Body of pancreas (tissue), 4 donors: ENCODE measurements at regions of chr4 and their contacts with region 1.

Region 1: DNA sequence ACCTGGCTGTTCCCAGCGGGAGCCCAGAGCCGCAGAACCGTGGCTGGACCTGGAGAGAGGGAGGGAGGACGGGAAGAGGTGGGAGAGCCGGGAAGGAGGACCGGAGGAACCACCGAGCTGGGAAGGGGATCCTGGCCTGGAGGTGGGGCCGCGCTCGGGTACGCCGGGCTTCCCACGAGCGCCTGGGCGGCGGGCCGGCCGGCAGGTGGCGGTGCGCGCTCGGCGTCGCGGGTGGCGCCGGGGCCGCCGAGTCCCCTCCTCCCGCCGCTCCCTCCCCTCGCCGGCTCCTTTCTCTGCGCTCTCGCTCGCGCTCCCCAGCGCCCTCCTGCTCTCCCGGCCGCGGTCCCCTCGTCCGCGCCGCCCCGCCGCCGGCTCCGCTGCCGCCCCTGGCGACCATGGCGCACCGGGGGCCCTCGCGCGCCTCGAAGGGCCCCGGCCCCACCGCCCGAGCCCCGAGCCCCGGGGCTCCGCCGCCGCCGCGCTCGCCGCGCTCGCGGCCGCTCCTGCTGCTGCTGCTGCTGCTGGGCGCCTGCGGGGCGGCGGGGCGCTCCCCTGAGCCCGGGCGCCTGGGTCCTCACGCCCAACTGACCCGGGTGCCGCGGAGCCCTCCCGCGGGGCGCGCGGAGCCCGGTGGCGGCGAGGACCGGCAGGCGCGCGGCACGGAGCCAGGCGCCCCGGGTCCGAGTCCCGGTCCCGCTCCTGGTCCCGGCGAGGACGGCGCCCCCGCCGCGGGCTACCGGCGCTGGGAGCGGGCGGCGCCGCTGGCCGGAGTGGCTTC is at the start of gene SORCS2:
- DNase-seq: peak; percentile 59 to 77 (median 62)
- ATAC-seq: peak; percentile 84
- H3K4me3 ChIP-seq: no peak within 1 kb of the TSS
- H3K27ac ChIP-seq: no peak within 1 kb of the TSS
- H3K4me1 ChIP-seq: peaks cover 12% of the 10 kb centered on the region
- H3K27me3 ChIP-seq: peaks cover 0 to 14% of the 10 kb centered on the region in 2 donors
- CTCF ChIP-seq: peak; percentile 13 to 94 (median 76)
- POLR2A ChIP-seq: no peak
- total RNA-seq, gene SORCS2: 0.26 to 0.33 TPM

Region 2: GRCh38 chr4:7134737-7135388 is 57.6 kb before region 1 on chr4:
- intact Hi-C with region 1: no loop called
- DNase-seq: peak; percentile 26 to 49 (median 36)
- ATAC-seq: peak; percentile 34
- H3K4me3 ChIP-seq: no peak overlapping the region
- H3K27ac ChIP-seq: no peak overlapping the region
- H3K4me1 ChIP-seq: no peaks in the 10 kb centered on the region
- H3K27me3 ChIP-seq: no peaks in the 10 kb centered on the region
- CTCF ChIP-seq: no peak
- POLR2A ChIP-seq: no peak

Region 3: GRCh38 chr4:7276515-7276914 is 84.1 kb after region 1 on chr4:
- intact Hi-C with region 1: no loop called
- DNase-seq: no peak
- ATAC-seq: no peak
- H3K4me3 ChIP-seq: no peak overlapping the region
- H3K27ac ChIP-seq: no peak overlapping the region
- H3K4me1 ChIP-seq: no peaks in the 10 kb centered on the region
- H3K27me3 ChIP-seq: no peaks in the 10 kb centered on the region
- CTCF ChIP-seq: no peak
- POLR2A ChIP-seq: no peak

Region 4: DNA sequence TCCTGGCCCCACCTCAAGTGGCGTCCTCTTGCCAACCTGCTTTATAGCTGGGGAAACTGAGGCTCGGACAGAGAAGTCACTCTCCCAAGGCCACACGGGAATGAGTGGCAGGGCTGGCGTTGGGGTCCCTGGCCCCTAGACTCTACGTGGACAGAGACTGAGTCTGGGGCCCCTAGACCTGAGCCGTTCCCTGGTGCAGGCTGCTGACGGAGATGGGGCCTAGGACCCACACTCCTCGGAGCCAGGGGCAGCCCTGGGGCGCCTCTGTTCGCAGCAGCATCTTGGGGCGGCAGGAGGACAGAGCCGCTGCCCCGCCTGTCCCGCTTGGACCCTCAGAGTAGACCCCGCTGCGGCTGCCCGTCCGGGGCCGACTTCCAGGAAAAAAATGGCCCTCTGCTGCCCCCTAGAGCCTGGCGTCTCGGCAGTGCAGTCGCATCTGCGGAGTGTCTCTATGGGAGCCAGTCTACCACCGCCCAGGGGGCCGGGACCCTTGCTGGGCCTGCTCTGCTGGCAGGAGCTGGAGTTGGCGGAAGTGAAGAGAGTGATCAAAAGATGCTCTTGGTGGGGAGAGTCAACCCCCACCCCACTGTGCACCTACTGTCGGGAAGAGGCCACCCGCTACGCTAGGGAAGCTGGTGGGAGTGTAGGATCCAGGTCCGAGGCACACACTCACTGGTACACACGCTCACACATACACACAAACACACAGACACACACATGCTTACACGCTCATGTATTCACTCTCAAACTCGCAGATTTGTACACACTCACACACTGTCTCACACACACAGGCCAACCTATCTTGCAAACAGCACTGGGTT is 527.1 kb after region 1 on chr4:
- intact Hi-C with region 1: loop called (anchors 5 kb)
- DNase-seq: peak; percentile 36 to 66 (median 52)
- ATAC-seq: peak; percentile 58
- H3K4me3 ChIP-seq: no peak overlapping the region
- H3K27ac ChIP-seq: no peak overlapping the region
- H3K4me1 ChIP-seq: peaks cover 5% of the 10 kb centered on the region
- H3K27me3 ChIP-seq: peaks cover 0 to 6% of the 10 kb centered on the region in 2 donors
- CTCF ChIP-seq: peak; percentile 55 to 81 (median 65)
- POLR2A ChIP-seq: no peak